Posterior cingulate gyrus (tissue), 11 donors: ENCODE measurements at regions of chr13 and their contacts with region 1.

Region 1: DNA sequence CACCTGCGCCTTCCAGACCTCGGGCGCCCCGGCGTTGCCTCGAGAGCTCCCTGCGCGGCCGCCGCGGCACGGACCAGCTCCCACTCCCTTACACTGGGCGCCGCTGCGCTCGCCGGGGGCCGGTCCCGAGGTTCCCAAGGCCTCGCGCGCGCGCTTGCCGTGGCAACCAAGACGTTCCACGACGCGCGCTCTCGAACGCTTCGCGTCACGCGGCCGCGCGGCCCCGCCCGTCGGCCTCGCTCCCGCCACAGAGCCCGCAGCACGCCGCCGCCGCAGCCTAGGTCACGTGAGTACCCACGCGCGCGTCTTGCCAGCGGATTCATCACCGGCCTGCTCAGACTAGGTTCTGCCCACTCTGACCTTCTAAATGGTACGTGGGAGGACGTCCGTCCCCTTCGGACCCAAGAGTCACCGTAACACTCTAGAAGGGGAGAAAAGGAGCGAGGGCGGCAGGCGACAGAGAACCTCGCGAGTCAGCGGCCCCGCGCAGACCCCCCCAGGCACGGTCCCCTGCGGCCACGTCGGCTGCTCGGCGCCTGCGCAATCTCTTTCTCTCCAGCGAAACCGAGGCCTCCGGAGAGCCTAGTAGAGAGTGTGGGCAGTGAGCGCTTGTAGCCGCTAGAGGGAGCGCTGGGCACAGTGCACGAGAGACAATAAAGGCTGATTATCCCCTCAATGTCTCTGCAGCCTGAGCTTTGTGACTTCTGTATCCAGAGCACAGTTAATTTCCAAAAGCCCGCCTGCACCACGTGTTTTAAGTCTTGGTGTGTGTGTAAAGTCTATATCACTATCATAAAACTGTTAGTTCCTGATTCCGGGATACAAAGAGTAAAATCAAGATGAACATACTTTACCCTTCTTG is at the start of gene SPART:
- DNase-seq: peak; percentile 92 to 99 (median 95)

Region 2: DNA sequence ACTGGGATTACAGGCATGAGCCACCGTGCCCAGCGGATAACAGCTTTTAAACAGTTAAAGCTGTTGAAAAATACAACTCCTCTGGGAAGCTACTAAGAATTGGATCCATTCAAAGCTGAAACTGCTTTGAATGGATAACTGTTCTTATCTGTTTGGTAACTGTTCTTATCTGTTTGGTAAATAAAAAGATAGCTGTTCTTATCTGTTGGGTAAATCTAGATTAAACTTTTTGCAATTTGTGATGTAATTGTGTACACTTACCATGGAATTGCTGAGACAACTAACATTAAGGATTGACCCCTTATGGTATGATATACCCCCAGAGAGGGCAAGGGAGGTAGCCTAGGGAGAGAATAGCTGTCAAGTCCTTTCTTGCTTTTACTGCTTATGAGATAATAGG is 27.6 kb after region 1 on chr13:
- intact Hi-C with region 1: loop called (anchors 2 kb)
- DNase-seq: no peak

Region 3: GRCh38 chr13:36395280-36395679 is 48.8 kb after region 1 on chr13:
- intact Hi-C with region 1: loop called (anchors 1 kb)
- DNase-seq: no peak

Region 4: DNA sequence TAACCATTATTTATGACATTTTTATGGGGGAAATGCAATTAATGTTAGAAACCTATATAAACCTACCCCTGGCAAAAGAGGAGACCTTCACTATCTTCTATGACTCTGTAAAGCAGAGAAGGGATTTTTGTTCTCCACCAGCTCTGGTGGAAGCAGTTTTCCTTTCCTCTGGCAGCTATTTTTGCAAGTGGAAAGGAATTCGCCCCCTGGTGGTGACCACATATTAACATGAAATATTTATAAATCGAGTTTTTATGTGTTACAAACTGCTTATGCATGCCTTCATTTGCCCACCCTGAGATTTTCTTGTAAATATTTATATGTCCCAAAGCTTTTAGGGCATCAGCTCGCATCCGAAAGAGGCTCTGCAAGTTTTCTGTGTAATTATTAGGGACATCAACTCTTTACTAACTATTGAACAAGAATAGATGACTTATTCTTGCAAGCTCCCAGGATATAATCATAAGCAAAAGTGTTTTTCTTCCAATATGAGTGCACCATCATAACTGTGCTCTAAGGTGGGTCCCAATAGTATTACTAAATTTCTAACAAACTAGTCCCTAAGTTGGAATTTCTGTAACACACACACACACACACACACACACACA is 389.8 kb after region 1 on chr13:
- intact Hi-C with region 1: loop called (anchors 5 kb)
- DNase-seq: peak in 6 of 10 donors; percentile 28 to 58 (median 46)

Region 5: DNA sequence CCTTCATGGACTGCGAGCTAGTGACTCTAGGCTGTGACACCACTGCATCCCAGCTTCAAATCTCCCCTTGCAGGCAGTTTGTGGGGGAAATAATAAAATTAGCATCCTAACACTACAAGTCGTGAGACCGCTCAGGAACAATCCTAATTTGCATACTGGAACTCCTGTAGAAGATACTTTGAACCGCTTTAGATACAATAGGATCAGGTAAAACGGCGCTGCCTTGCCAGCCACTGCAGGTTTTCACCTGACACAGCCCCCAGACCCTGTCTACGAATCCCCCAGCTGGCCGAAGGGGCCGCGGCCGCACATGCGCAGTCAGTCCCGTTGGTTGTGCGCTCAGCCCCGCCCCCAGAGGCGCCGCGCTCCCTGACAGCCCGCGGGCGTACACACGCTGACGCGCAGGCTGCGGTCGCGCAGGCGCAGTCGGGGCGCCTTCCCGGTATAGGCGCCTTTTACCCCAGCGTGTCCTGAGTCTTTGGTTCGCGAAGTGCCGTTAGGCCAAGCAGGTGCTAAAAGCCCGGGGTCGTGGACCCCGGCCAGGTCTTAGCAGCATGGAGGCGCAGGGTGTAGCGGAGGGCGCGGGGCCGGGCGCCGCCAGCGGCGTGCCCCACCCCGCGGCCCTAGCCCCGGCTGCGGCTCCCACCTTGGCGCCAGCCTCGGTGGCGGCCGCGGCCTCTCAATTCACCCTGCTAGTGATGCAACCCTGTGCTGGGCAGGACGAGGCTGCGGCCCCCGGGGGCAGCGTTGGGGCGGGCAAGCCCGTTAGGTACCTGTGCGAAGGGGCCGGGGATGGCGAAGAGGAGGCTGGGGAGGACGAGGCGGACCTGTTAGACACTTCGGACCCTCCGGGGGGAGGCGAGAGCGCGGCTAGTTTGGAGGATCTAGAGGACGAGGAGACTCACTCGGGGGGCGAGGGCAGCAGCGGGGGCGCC is 472.6 kb after region 1 on chr13 and contains the start of gene RFXAP:
- intact Hi-C with region 1: loop called (anchors 5 kb)
- DNase-seq: peak; percentile 78 to 98 (median 88)